ENCODE measurements at regions of chr1 and their contacts with region 1.

Region 1: GRCh38 chr1:47725992-47726855 is 271.0 kb downstream of the TRABD2B start:
- DNase-seq: peak; percentile 40 to 73
- ATAC-seq: peak; percentile 75 to 95 (median 78)
- H3K4me3 ChIP-seq: no peak overlapping the region
- H3K4me3 Mint-ChIP-seq: peak overlapping the region; percentile 57
- H3K27ac ChIP-seq: no peak overlapping the region
- H3K27ac Mint-ChIP-seq: no peak overlapping the region
- H3K4me1 ChIP-seq: peaks cover 7% of the 10 kb centered on the region
- H3K4me1 Mint-ChIP-seq: peaks cover 7 to 8% of the 10 kb centered on the region in 2 donors
- H3K27me3 ChIP-seq: peaks cover 5% of the 10 kb centered on the region
- H3K27me3 Mint-ChIP-seq: peaks cover 29 to 64% of the 10 kb centered on the region in 2 donors
- CTCF ChIP-seq: peak; percentile 75

Region 2: DNA sequence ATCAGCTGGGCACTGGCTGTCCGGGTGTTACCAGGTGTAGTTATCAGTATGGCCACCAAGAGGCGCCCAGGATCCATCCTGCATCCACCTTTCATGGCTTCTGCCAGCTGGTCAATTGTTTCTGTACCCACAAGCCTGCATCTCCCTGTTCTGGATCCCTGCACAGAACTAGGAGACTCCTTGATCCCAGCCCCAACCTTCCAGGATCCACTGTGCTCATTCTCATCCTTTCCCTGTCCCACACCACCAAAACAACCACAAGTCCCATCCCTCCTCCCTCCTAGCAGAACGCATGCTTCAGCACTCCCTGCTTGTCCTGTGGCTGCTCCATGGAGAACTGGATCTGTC is 337.4 kb before region 1 on chr1:
- intact Hi-C with region 1: loop called (anchors 5 kb)
- DNase-seq: peak; percentile 25 to 56
- ATAC-seq: peak in 2 of 3 donors; percentile 57 to 73
- H3K4me3 ChIP-seq: no peak overlapping the region
- H3K4me3 Mint-ChIP-seq: no peak overlapping the region
- H3K27ac ChIP-seq: no peak overlapping the region
- H3K27ac Mint-ChIP-seq: no peak overlapping the region
- H3K4me1 ChIP-seq: no peaks in the 10 kb centered on the region
- H3K4me1 Mint-ChIP-seq: no peaks in the 10 kb centered on the region
- H3K27me3 ChIP-seq: no peaks in the 10 kb centered on the region
- H3K27me3 Mint-ChIP-seq: peaks cover 0 to 4% of the 10 kb centered on the region in 2 donors
- CTCF ChIP-seq: peak; percentile 57

Region 3: GRCh38 chr1:47656719-47657685 is 69.2 kb before region 1 on chr1:
- intact Hi-C with region 1: no loop called
- DNase-seq: no peak
- ATAC-seq: no peak
- H3K4me3 ChIP-seq: no peak overlapping the region
- H3K4me3 Mint-ChIP-seq: no peak overlapping the region
- H3K27ac ChIP-seq: no peak overlapping the region
- H3K27ac Mint-ChIP-seq: no peak overlapping the region
- H3K4me1 ChIP-seq: no peaks in the 10 kb centered on the region
- H3K4me1 Mint-ChIP-seq: no peaks in the 10 kb centered on the region
- H3K27me3 ChIP-seq: no peaks in the 10 kb centered on the region
- H3K27me3 Mint-ChIP-seq: peaks cover 21 to 28% of the 10 kb centered on the region in 2 donors
- CTCF ChIP-seq: no peak

Measured in natural killer cell (primary cell).